ENCODE measurements at regions of chr14 and their contacts with region 1.

Region 1: DNA sequence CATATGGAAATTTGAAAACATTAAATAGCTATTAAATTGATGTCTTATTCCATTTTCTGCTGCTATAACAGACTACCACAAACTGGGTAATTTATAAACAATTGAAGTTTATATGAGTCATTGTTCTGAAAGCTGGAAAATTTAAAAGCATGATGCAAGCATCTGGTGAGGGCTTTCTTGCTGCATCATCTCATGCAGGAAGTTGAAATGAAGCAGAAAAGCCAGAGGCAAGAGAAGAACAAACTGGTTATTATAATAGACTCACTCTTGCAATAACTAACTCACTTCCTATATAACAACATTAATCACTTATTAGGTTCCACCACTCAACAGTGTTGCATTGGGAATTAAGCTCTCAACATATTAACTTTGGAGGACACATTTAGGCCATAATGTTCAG is 1277.4 kb downstream of the LRFN5 start:
- DNase-seq: no peak
- ATAC-seq: no peak
- H3K4me3 ChIP-seq: no peak overlapping the region
- H3K4me3 Mint-ChIP-seq: no peak overlapping the region
- H3K27ac ChIP-seq: no peak overlapping the region
- H3K27ac Mint-ChIP-seq: no peak overlapping the region
- H3K4me1 ChIP-seq: no peaks in the 10 kb centered on the region
- H3K4me1 Mint-ChIP-seq: no peaks in the 10 kb centered on the region
- H3K27me3 ChIP-seq: no peaks in the 10 kb centered on the region
- H3K27me3 Mint-ChIP-seq: no peaks in the 10 kb centered on the region

Region 2: GRCh38 chr14:42469637-42470426 is 414.3 kb before region 1 on chr14:
- CTCF ChIA-PET with region 1: no interaction called
- POLR2A ChIA-PET with region 1: interaction called in 1 of 2 experiments, 12 read pairs
- DNase-seq: no peak
- ATAC-seq: no peak
- H3K4me3 ChIP-seq: no peak overlapping the region
- H3K4me3 Mint-ChIP-seq: no peak overlapping the region
- H3K27ac ChIP-seq: no peak overlapping the region
- H3K27ac Mint-ChIP-seq: no peak overlapping the region
- H3K4me1 ChIP-seq: no peaks in the 10 kb centered on the region
- H3K4me1 Mint-ChIP-seq: no peaks in the 10 kb centered on the region
- H3K27me3 ChIP-seq: no peaks in the 10 kb centered on the region
- H3K27me3 Mint-ChIP-seq: no peaks in the 10 kb centered on the region

Region 3: DNA sequence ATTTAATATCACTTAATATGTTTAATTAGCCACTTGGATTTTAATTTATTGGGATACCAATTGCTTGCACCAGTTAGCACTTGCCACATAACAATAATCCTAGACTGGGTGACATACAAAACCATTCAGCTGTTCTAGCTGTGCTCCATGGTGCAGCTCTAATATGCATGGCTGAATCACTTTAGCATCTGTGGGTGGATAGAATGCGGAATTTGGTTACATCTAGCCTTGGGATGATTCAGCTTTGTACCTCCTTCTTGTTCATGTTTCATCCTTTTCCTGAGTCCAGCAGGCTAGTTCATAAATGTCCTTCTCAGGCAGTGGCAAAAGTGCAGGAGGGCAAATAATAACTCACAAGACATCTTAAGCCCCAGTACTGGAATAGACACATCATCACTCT is 14.4 kb before region 1 on chr14:
- CTCF ChIA-PET with region 1: no interaction called
- POLR2A ChIA-PET with region 1: no interaction called
- DNase-seq: no peak
- ATAC-seq: no peak
- H3K4me3 ChIP-seq: no peak overlapping the region
- H3K4me3 Mint-ChIP-seq: no peak overlapping the region
- H3K27ac ChIP-seq: no peak overlapping the region
- H3K27ac Mint-ChIP-seq: no peak overlapping the region
- H3K4me1 ChIP-seq: no peaks in the 10 kb centered on the region
- H3K4me1 Mint-ChIP-seq: no peaks in the 10 kb centered on the region
- H3K27me3 ChIP-seq: no peaks in the 10 kb centered on the region
- H3K27me3 Mint-ChIP-seq: no peaks in the 10 kb centered on the region

Measured in T-cell (primary cell).